HepG2 (cell line): ENCODE measurements at regions of chr10 and their contacts with region 1.

Region 1: DNA sequence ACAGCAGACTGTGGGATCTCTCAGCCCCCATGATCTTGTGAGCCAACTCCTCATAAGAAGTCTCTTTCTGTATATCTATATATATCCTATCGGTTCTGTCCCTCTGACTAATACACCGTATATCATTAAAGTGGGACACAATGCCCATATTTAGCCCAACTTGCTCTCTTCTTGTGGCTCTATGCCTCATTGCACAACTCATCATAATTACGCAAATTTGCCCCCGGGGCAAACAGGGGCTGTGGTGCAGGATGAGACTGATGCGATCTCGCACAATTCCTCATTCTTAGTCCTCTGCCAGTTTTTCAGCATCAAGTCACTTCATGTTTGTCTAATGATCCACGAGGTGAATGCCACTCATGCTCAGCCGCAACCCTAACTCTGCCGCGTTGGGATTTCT is 183.2 kb downstream of the PRPF18 start:
- DNase-seq: no peak
- ATAC-seq: no peak
- H3K4me3 ChIP-seq: no peak overlapping the region
- H3K27ac ChIP-seq: no peak overlapping the region
- H3K4me1 ChIP-seq: peaks cover 36% of the 10 kb centered on the region
- H3K27me3 ChIP-seq: no peaks in the 10 kb centered on the region
- CTCF ChIP-seq: no peak
- EP300 ChIP-seq: no peak
- POLR2A ChIP-seq: no peak
- RAD21 ChIP-seq: no peak

Region 2: DNA sequence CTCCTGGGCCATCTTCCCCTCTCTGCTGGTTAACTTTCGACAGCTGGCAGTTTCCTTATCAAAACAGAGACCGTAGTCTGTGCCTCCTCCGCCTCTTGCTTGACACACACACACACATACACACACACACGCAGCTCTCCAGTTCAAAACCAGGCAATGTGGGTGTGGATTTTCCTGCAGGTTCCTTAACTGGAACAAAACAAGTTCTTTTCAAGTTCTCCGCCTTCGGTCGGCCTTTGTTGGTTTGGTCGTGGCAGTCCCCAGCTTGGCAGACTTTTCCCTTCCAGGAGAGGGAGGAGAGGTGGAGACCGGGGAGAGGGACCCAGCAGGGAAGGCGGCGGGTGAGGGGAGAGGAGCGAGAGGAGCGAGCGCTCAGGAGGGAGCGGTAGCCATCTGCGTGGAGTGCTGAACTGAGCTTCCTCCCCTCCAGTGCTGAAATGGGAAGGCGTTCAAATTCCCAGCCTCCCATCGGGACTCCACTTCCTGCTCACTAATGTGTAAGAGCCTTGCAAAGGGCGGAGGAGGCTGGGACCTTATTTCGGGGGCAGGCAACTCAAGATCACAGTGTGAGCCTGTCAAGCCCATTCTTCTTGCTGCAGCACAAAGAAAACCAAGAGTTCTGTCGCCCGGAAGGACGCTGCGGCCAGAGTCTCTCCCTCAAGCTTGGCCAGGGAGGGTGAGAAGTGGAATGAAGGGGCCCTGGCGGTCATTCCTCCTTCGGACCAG is 62.6 kb before region 1 on chr10:
- CTCF ChIA-PET with region 1: no interaction called
- POLR2A ChIA-PET with region 1: no interaction called
- in situ Hi-C with region 1: no loop called
- intact Hi-C with region 1: loop called (anchors 5 kb)
- DNase-seq: peak; percentile 11
- ATAC-seq: peak; percentile 87
- H3K4me3 ChIP-seq: peak overlapping the region; percentile 51 to 68 (median 52)
- H3K27ac ChIP-seq: no peak overlapping the region
- H3K4me1 ChIP-seq: peaks cover 30% of the 10 kb centered on the region
- H3K27me3 ChIP-seq: peaks cover 0 to 37% of the 10 kb centered on the region in 2 experiments; a peak in 4 of 5 replicates
- CTCF ChIP-seq: no peak
- EP300 ChIP-seq: no peak
- POLR2A ChIP-seq: no peak
- RAD21 ChIP-seq: no peak

Region 3: DNA sequence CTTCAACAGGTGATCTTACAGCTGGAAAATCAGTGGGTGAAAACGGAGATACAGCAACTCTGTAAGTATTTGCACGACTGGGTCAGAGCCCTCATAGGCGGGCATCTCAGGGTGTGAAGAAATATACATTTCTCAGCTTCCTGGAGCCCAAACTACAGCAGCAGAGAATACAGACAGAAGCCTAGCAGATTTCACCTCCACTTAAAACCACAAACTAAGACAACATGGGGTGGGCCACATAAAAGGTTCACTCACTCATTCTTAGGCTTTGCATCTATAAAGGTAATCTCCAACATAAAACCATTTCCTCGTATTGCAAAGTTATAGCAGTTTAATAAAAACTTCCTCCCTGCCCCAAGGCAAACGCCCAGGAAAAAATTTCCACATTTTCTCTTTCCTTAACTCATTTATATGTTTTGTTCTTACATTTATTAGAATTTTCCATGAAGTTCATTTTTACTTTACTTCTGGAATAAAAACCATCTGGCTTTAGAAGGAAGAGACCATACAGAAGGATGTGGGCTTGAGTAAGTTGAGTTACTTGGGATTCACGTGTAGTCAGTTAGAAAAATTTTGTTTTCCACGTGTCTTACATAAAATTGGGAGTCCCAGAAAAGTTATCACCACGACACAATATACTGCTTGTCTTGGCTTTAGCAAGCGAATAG is 233.7 kb after region 1 on chr10:
- CTCF ChIA-PET with region 1: no interaction called
- POLR2A ChIA-PET with region 1: no interaction called
- in situ Hi-C with region 1: no loop called
- intact Hi-C with region 1: no loop called
- DNase-seq: no peak
- ATAC-seq: no peak
- H3K4me3 ChIP-seq: no peak overlapping the region
- H3K27ac ChIP-seq: no peak overlapping the region
- H3K4me1 ChIP-seq: no peaks in the 10 kb centered on the region
- H3K27me3 ChIP-seq: peaks cover 4 to 12% of the 10 kb centered on the region in 2 experiments; a peak in 4 of 5 replicates
- CTCF ChIP-seq: no peak
- EP300 ChIP-seq: no peak
- POLR2A ChIP-seq: no peak
- RAD21 ChIP-seq: no peak